ENCODE measurements at regions of chr16 and their contacts with region 1.

Region 1: GRCh38 chr16:28140788-28141618 is 70.8 kb downstream of the XPO6 start:
- DNase-seq: peak; percentile 48 to 98 (median 72)
- ATAC-seq: peak; percentile 75
- H3K4me3 ChIP-seq: peak overlapping the region; percentile 37 to 39
- H3K4me3 Mint-ChIP-seq: peak overlapping the region; percentile 81
- H3K27ac ChIP-seq: peak overlapping the region; percentile 88 to 91
- H3K27ac Mint-ChIP-seq: peak overlapping the region; percentile 98
- H3K4me1 ChIP-seq: peaks cover 93% of the 10 kb centered on the region
- H3K4me1 Mint-ChIP-seq: peaks cover 86% of the 10 kb centered on the region
- H3K27me3 ChIP-seq: no peaks in the 10 kb centered on the region
- H3K27me3 Mint-ChIP-seq: no peaks in the 10 kb centered on the region
- CTCF ChIP-seq: no peak

Region 2: DNA sequence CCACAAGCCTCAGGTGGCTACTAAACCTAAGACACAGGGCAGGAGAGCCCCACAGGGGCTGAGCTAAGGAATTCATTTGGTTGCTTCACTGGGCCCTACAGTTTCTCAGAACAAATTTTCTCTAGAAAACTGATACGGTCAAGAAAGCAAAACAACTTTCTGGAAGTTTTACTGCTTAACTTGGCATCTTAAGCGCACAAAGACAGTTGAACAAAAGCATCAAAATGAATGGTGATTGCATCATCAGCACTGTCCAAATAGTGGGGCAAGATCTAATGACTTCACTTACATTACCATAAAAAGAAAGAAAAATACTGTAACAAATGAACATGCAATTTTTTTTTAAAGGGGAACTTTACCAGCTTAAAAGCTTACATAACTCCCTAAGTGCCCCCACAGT is 23.1 kb after region 1 on chr16:
- CTCF ChIA-PET with region 1: interaction called, 5 read pairs
- POLR2A ChIA-PET with region 1: interaction called, 6 read pairs
- intact Hi-C with region 1: loop called (anchors 1 kb)
- DNase-seq: no peak
- ATAC-seq: no peak
- H3K4me3 ChIP-seq: no peak overlapping the region
- H3K4me3 Mint-ChIP-seq: no peak overlapping the region
- H3K27ac ChIP-seq: peak overlapping the region in 1 of 2 experiments; percentile 9
- H3K27ac Mint-ChIP-seq: peak overlapping the region; percentile 89
- H3K4me1 ChIP-seq: peaks cover 82% of the 10 kb centered on the region
- H3K4me1 Mint-ChIP-seq: peaks cover 87% of the 10 kb centered on the region
- H3K27me3 ChIP-seq: no peaks in the 10 kb centered on the region
- H3K27me3 Mint-ChIP-seq: no peaks in the 10 kb centered on the region
- CTCF ChIP-seq: no peak

Region 3: GRCh38 chr16:28211712-28212534 is 70.9 kb after region 1 on chr16 and contains the start of gene XPO6:
- CTCF ChIA-PET with region 1: interaction called, 394 read pairs
- POLR2A ChIA-PET with region 1: interaction called, 49 read pairs
- intact Hi-C with region 1: loop called (anchors 1 kb)
- DNase-seq: peak; percentile 96 to 100 (median 99)
- ATAC-seq: peak; percentile 90
- H3K4me3 ChIP-seq: peak within 1 kb of the TSS; percentile 69 to 91
- H3K4me3 Mint-ChIP-seq: peak within 1 kb of the TSS; percentile 90
- H3K27ac ChIP-seq: peak within 1 kb of the TSS; percentile 75 to 76
- H3K27ac Mint-ChIP-seq: peak within 1 kb of the TSS; percentile 91
- H3K4me1 ChIP-seq: peaks cover 32% of the 10 kb centered on the region
- H3K4me1 Mint-ChIP-seq: peaks cover 37% of the 10 kb centered on the region
- H3K27me3 ChIP-seq: no peaks in the 10 kb centered on the region
- H3K27me3 Mint-ChIP-seq: no peaks in the 10 kb centered on the region
- CTCF ChIP-seq: no peak
- total RNA-seq, gene XPO6: 355 to 369 TPM

Region 4: GRCh38 chr16:28291873-28292660 is 151.1 kb after region 1 on chr16 and contains the start of gene SBK1:
- CTCF ChIA-PET with region 1: no interaction called
- POLR2A ChIA-PET with region 1: no interaction called
- intact Hi-C with region 1: loop called in 1 of 2 experiments (anchors 5 kb)
- DNase-seq: peak; percentile 68 to 94 (median 84)
- ATAC-seq: peak; percentile 90
- H3K4me3 ChIP-seq: peak within 1 kb of the TSS; percentile 82 to 92
- H3K4me3 Mint-ChIP-seq: peak within 1 kb of the TSS; percentile 94
- H3K27ac ChIP-seq: peak within 1 kb of the TSS; percentile 56 to 75
- H3K27ac Mint-ChIP-seq: peak within 1 kb of the TSS; percentile 93
- H3K4me1 ChIP-seq: peaks cover 74% of the 10 kb centered on the region
- H3K4me1 Mint-ChIP-seq: peaks cover 67% of the 10 kb centered on the region
- H3K27me3 ChIP-seq: no peaks in the 10 kb centered on the region
- H3K27me3 Mint-ChIP-seq: no peaks in the 10 kb centered on the region
- CTCF ChIP-seq: no peak
- total RNA-seq, gene SBK1: 16.5 to 17.1 TPM

Region 5: GRCh38 chr16:28553776-28554633 is 413.0 kb after region 1 on chr16 and contains the start of gene SGF29:
- CTCF ChIA-PET with region 1: no interaction called
- POLR2A ChIA-PET with region 1: no interaction called
- intact Hi-C with region 1: loop called in 1 of 2 experiments (anchors 10 kb)
- DNase-seq: peak; percentile 86 to 97 (median 93)
- ATAC-seq: peak; percentile 93
- H3K4me3 ChIP-seq: peak within 1 kb of the TSS; percentile 87 to 99
- H3K4me3 Mint-ChIP-seq: peak within 1 kb of the TSS; percentile 92
- H3K27ac ChIP-seq: peak within 1 kb of the TSS; percentile 95 to 98
- H3K27ac Mint-ChIP-seq: peak within 1 kb of the TSS; percentile 98
- H3K4me1 ChIP-seq: peaks cover 18% of the 10 kb centered on the region
- H3K4me1 Mint-ChIP-seq: peaks cover 36% of the 10 kb centered on the region
- H3K27me3 ChIP-seq: no peaks in the 10 kb centered on the region
- H3K27me3 Mint-ChIP-seq: no peaks in the 10 kb centered on the region
- CTCF ChIP-seq: no peak
- total RNA-seq, gene SGF29: 41.1 to 44.5 TPM

Measured in CD8-positive, alpha-beta T cell (primary cell).